ENCODE measurements at regions of chr5 and their contacts with region 1.

Region 1: GRCh38 chr5:3595006-3595961 is at the start of gene IRX1:
- DNase-seq: no peak
- ATAC-seq: no peak
- H3K4me3 Mint-ChIP-seq: no peak within 1 kb of the TSS
- H3K27ac Mint-ChIP-seq: no peak within 1 kb of the TSS
- H3K4me1 Mint-ChIP-seq: peaks cover 12% of the 10 kb centered on the region
- H3K27me3 Mint-ChIP-seq: peaks cover 67% of the 10 kb centered on the region
- CTCF ChIP-seq: no peak
- total RNA-seq, gene IRX1: not detected

Region 2: GRCh38 chr5:1874771-1875220 is 1720.5 kb before region 1 on chr5:
- CTCF ChIA-PET with region 1: no interaction called
- POLR2A ChIA-PET with region 1: no interaction called
- intact Hi-C with region 1: loop called (anchors 10 kb)
- DNase-seq: no peak
- ATAC-seq: no peak
- H3K4me3 Mint-ChIP-seq: no peak overlapping the region
- H3K27ac Mint-ChIP-seq: no peak overlapping the region
- H3K4me1 Mint-ChIP-seq: peaks cover 5% of the 10 kb centered on the region
- H3K27me3 Mint-ChIP-seq: peaks cover 44% of the 10 kb centered on the region
- CTCF ChIP-seq: no peak

Region 3: GRCh38 chr5:3277590-3278196 is 317.6 kb before region 1 on chr5:
- CTCF ChIA-PET with region 1: no interaction called
- POLR2A ChIA-PET with region 1: no interaction called
- intact Hi-C with region 1: no loop called
- DNase-seq: peak; percentile 68
- ATAC-seq: peak; percentile 98
- H3K4me3 Mint-ChIP-seq: no peak overlapping the region
- H3K27ac Mint-ChIP-seq: no peak overlapping the region
- H3K4me1 Mint-ChIP-seq: peaks cover 4% of the 10 kb centered on the region
- H3K27me3 Mint-ChIP-seq: peaks cover 12% of the 10 kb centered on the region
- CTCF ChIP-seq: no peak